ENCODE measurements at regions of chr15 and their contacts with region 1.

Region 1: GRCh38 chr15:80152180-80152845 is 486 bp upstream of the FAH start:
- DNase-seq: peak; percentile 79 to 81
- H3K4me3 ChIP-seq: peak overlapping the region; percentile 64
- H3K27ac ChIP-seq: peak overlapping the region; percentile 60
- H3K4me1 ChIP-seq: peaks cover 26% of the 10 kb centered on the region
- H3K27me3 ChIP-seq: no peaks in the 10 kb centered on the region
- CTCF ChIP-seq: no peak

Region 2: DNA sequence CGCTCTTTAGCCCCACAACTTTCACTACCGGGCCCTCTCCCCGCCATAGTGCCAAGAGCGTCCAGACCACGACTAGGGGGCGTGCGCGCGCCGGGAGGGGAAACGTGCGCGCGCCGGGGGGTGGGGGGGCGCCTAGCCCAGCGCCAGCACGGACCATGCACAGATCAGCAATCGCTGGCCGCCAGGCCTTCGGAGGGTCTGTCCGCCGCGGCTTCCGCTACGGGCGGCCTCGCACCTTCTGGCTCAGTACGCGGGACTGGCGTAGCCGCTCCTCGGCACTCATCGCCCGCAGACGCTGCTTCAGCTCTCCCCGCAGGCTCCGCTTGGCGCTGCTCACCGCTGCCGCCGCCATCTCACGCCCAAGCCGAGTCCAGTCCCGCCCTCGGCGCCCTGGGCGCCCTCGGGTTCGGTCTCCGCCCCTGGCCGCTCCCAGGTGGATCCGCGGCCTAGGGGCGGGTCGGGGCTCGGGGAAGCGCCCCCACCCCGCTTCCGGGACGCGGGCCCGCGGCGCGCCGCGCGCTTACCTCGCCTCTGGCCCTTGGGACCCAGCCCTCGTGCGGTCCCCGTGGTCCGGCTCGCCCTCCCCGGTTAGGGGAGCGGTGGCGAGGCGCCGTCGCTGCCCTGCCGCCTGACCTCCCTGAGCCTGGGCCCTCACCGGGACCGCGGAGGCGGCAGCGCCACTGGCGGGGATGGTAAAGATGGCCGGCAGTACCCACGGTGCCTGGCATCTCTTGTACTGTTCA is 255.5 kb before region 1 on chr15 and contains the start of gene MTHFS:
- CTCF ChIA-PET with region 1: interaction called, 6 read pairs
- POLR2A ChIA-PET with region 1: interaction called, 5 read pairs
- intact Hi-C with region 1: loop called (anchors 2 kb)
- DNase-seq: peak; percentile 66 to 84
- H3K4me3 ChIP-seq: peak within 1 kb of the TSS; percentile 70
- H3K27ac ChIP-seq: peak within 1 kb of the TSS; percentile 79
- H3K4me1 ChIP-seq: peaks cover 39% of the 10 kb centered on the region
- H3K27me3 ChIP-seq: no peaks in the 10 kb centered on the region
- CTCF ChIP-seq: peak; percentile 64
- total RNA-seq, gene MTHFS: 27.1 and 33.6 TPM in 2 replicates

Region 3: GRCh38 chr15:79923515-79924395 is 228.6 kb before region 1 on chr15:
- CTCF ChIA-PET with region 1: no interaction called
- POLR2A ChIA-PET with region 1: interaction called, 3 read pairs
- intact Hi-C with region 1: loop called (anchors 2 kb)
- DNase-seq: peak; percentile 91 to 99
- H3K4me3 ChIP-seq: peak overlapping the region; percentile 75
- H3K27ac ChIP-seq: peak overlapping the region; percentile 77
- H3K4me1 ChIP-seq: 0 out of 2 replicates have a peak, but pooled peaks cover 8% of the 10 kb centered on the region
- H3K27me3 ChIP-seq: no peaks in the 10 kb centered on the region
- CTCF ChIP-seq: no peak

Region 4: GRCh38 chr15:80093854-80094418 is 58.4 kb before region 1 on chr15:
- CTCF ChIA-PET with region 1: interaction called, 11 read pairs
- POLR2A ChIA-PET with region 1: no interaction called
- intact Hi-C with region 1: no loop called
- DNase-seq: no peak
- H3K4me3 ChIP-seq: no peak overlapping the region
- H3K27ac ChIP-seq: no peak overlapping the region
- H3K4me1 ChIP-seq: peaks cover 10% of the 10 kb centered on the region; the same call in 1 of the 2 replicates
- H3K27me3 ChIP-seq: no peaks in the 10 kb centered on the region
- CTCF ChIP-seq: no peak

Region 5: DNA sequence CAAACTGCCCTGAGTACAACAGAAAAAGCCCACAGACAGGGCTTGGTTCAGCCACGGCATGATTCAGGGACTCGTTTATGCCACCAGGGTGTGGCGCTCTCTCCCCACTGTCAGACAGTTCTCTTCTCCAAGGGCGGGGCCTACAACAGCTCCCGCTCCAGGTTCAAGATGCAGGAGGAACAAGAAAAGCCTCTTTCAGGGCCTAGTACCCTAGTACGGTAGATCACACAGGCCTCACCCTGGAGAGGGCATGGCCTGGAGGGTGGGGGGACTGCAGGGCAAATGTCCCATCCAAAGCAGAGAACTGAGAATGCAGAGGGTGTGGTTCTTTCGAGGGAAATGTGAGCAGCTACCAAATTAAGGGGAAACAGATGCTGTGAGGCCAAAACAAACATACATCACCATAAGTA is 825.3 kb after region 1 on chr15:
- CTCF ChIA-PET with region 1: no interaction called
- POLR2A ChIA-PET with region 1: interaction called, 23 read pairs
- intact Hi-C with region 1: no loop called
- DNase-seq: no peak
- H3K4me3 ChIP-seq: no peak overlapping the region
- H3K27ac ChIP-seq: no peak overlapping the region
- H3K4me1 ChIP-seq: 0 out of 2 replicates have a peak, but pooled peaks cover 12% of the 10 kb centered on the region
- H3K27me3 ChIP-seq: no peaks in the 10 kb centered on the region
- CTCF ChIP-seq: no peak